Esophagus muscularis mucosa (tissue), 4 donors: ENCODE measurements at regions of chr1 and their contacts with region 1.

Region 1: DNA sequence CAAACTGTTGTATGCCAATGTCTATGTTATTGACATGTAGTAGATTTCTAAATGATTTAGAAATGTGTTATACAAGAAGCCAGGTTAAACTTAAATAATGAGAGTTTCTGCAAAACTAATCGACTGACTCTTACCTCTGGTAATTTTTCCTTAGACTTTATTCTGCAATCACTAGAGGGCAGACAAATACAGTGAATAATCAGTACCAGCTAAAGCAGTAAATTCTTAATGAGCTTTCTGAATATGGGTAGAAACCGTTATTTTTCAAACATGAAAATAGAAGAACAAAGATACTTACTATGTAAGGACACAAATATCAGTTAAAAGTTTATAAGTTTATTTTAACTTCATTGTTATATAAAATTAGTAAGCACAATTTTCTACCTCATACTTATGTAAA is 97.9 kb upstream of the RGS1 start:
- DNase-seq: no peak
- H3K4me3 ChIP-seq: no peak overlapping the region
- H3K27ac ChIP-seq: peak overlapping the region in 3 of 4 donors; percentile 28 to 47 (median 41)
- H3K4me1 ChIP-seq: peaks cover 3 to 33% (median 15%) of the 10 kb centered on the region in 4 donors
- H3K27me3 ChIP-seq: no peaks in the 10 kb centered on the region
- CTCF ChIP-seq: peak; percentile 62 to 80 (median 64)
- EP300 ChIP-seq: no peak
- POLR2A ChIP-seq: no peak

Region 2: DNA sequence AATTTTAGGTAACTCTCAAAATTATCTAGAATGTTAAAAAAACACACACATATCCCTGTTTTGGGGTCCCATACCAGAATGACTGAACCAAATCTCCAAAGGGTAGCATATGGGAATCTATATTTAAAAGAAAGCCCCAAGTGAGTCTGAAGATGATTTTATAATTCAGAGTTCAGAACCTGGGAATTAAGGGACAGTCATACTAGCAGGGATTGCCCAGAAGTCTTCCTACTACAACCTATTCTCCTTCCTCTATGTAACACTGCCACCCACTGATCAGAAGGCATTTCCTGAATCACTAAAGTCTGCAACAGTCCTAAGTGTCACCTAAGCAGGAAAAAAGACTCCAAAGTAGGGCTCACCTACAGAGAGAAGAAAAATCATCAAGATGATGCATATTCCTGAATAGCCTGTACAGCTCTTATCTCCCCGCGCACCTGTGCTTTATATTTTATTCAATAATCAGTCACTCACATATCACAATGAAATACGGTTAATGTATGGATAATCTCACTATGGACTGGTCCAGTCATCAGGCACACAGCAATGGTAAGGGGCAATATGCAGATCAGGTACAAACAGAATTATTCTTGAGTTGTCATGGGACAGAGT is 102.8 kb after region 1 on chr1:
- intact Hi-C with region 1: loop called (anchors 5 kb)
- DNase-seq: no peak
- H3K4me3 ChIP-seq: peak overlapping the region; percentile 39 to 54 (median 47)
- H3K27ac ChIP-seq: peak overlapping the region; percentile 75 to 84 (median 82)
- H3K4me1 ChIP-seq: peaks cover 4 to 47% (median 21%) of the 10 kb centered on the region in 4 donors
- H3K27me3 ChIP-seq: no peaks in the 10 kb centered on the region
- CTCF ChIP-seq: peak; percentile 51 to 68 (median 57)
- EP300 ChIP-seq: no peak
- POLR2A ChIP-seq: no peak

Region 3: GRCh38 chr1:192609110-192610079 is 131.8 kb after region 1 on chr1:
- intact Hi-C with region 1: loop called (anchors 2 kb)
- DNase-seq: no peak
- H3K4me3 ChIP-seq: no peak overlapping the region
- H3K27ac ChIP-seq: peak overlapping the region in 3 of 4 donors; percentile 33 to 47 (median 44)
- H3K4me1 ChIP-seq: peaks cover 0 to 26% (median 13%) of the 10 kb centered on the region in 4 donors
- H3K27me3 ChIP-seq: no peaks in the 10 kb centered on the region
- CTCF ChIP-seq: peak in 1 of 3 experiments; percentile 5
- EP300 ChIP-seq: no peak
- POLR2A ChIP-seq: no peak

Region 4: GRCh38 chr1:192817246-192817645 is 339.6 kb after region 1 on chr1:
- intact Hi-C with region 1: no loop called
- DNase-seq: no peak
- H3K4me3 ChIP-seq: peak overlapping the region in 1 of 4 donors; percentile 8
- H3K27ac ChIP-seq: peak overlapping the region; percentile 25 to 63 (median 54)
- H3K4me1 ChIP-seq: peaks cover 0 to 20% (median 15%) of the 10 kb centered on the region in 4 donors
- H3K27me3 ChIP-seq: no peaks in the 10 kb centered on the region
- CTCF ChIP-seq: no peak
- EP300 ChIP-seq: no peak
- POLR2A ChIP-seq: no peak

Region 5: GRCh38 chr1:193019442-193020026 is 541.9 kb after region 1 on chr1:
- intact Hi-C with region 1: loop called (anchors 5 kb)
- DNase-seq: no peak
- H3K4me3 ChIP-seq: peak overlapping the region in 3 of 4 donors; percentile 3 to 11 (median 3)
- H3K27ac ChIP-seq: peak overlapping the region in 3 of 4 donors; percentile 20 to 53 (median 41)
- H3K4me1 ChIP-seq: peaks cover 3 to 36% (median 19%) of the 10 kb centered on the region in 4 donors
- H3K27me3 ChIP-seq: no peaks in the 10 kb centered on the region
- CTCF ChIP-seq: peak; percentile 58 to 75 (median 66)
- EP300 ChIP-seq: no peak
- POLR2A ChIP-seq: no peak

Region 6: GRCh38 chr1:193121616-193122593 is 644.3 kb after region 1 on chr1 and contains the start of gene CDC73:
- intact Hi-C with region 1: loop called (anchors 10 kb)
- DNase-seq: peak; percentile 99
- H3K4me3 ChIP-seq: peak within 1 kb of the TSS; percentile 81 to 91 (median 82)
- H3K27ac ChIP-seq: peak within 1 kb of the TSS; percentile 94 to 97 (median 96)
- H3K4me1 ChIP-seq: peaks cover 29 to 43% (median 41%) of the 10 kb centered on the region in 4 donors
- H3K27me3 ChIP-seq: no peaks in the 10 kb centered on the region
- CTCF ChIP-seq: peak; percentile 89 to 91 (median 91)
- EP300 ChIP-seq: no peak
- POLR2A ChIP-seq: peak; percentile 66
- total RNA-seq, gene CDC73: 45.4 to 66.9 (median 46.0) TPM